Mammary epithelial cell (primary cell): ENCODE measurements at regions of chr14 and their contacts with region 1.

Region 1: DNA sequence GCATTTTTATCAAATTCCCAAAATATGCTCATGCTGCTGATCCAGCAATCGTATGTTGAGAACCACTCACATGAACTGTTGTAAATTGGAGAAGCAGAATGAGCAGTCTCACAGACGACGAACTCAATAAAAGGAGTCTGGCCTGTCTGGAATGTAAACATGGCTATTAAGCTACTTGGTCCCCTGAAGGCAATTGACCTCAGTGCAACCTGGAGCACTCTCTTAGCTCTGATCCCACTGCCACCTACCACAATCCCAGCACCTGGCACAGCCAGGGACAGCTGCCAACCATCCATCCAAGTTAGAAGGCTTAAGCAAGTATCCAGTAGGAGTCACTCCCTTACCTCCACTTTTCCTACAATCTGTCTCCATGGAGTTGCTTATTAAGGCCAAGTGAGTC is 406.9 kb upstream of the CLEC14A start:
- DNase-seq: no peak
- H3K4me3 ChIP-seq: no peak overlapping the region
- H3K27ac ChIP-seq: no peak overlapping the region
- H3K4me1 ChIP-seq: no peaks in the 10 kb centered on the region
- H3K27me3 ChIP-seq: no peaks in the 10 kb centered on the region
- CTCF ChIP-seq: no peak

Region 2: GRCh38 chr14:38605193-38606114 is 57.3 kb before region 1 on chr14:
- CTCF ChIA-PET with region 1: no interaction called
- dilution Hi-C with region 1: loop called (anchors 10 kb)
- in situ Hi-C with region 1: no loop called
- intact Hi-C with region 1: no loop called
- DNase-seq: no peak
- H3K4me3 ChIP-seq: no peak overlapping the region
- H3K27ac ChIP-seq: no peak overlapping the region
- H3K4me1 ChIP-seq: no peaks in the 10 kb centered on the region
- H3K27me3 ChIP-seq: no peaks in the 10 kb centered on the region
- CTCF ChIP-seq: no peak

Region 3: GRCh38 chr14:38818555-38818954 is 155.8 kb after region 1 on chr14:
- CTCF ChIA-PET with region 1: no interaction called
- dilution Hi-C with region 1: no loop called
- in situ Hi-C with region 1: no loop called
- intact Hi-C with region 1: no loop called
- DNase-seq: no peak
- H3K4me3 ChIP-seq: no peak overlapping the region
- H3K27ac ChIP-seq: no peak overlapping the region
- H3K4me1 ChIP-seq: no peaks in the 10 kb centered on the region
- H3K27me3 ChIP-seq: no peaks in the 10 kb centered on the region
- CTCF ChIP-seq: no peak